HepG2 (cell line): ENCODE measurements at regions of chr14 and their contacts with region 1.

Region 1: GRCh38 chr14:23269193-23269592 is 16.7 kb downstream of the HOMEZ start:
- DNase-seq: no peak
- ATAC-seq: peak; percentile 20; the same call in 1 of the 3 replicates
- H3K4me3 ChIP-seq: no peak overlapping the region
- H3K27ac ChIP-seq: no peak overlapping the region
- H3K4me1 ChIP-seq: no peaks in the 10 kb centered on the region
- H3K27me3 ChIP-seq: peaks cover 0 to 8% of the 10 kb centered on the region in 2 experiments; a peak in 1 of 5 replicates
- CTCF ChIP-seq: no peak
- EP300 ChIP-seq: no peak
- POLR2A ChIP-seq: no peak
- RAD21 ChIP-seq: no peak

Region 2: DNA sequence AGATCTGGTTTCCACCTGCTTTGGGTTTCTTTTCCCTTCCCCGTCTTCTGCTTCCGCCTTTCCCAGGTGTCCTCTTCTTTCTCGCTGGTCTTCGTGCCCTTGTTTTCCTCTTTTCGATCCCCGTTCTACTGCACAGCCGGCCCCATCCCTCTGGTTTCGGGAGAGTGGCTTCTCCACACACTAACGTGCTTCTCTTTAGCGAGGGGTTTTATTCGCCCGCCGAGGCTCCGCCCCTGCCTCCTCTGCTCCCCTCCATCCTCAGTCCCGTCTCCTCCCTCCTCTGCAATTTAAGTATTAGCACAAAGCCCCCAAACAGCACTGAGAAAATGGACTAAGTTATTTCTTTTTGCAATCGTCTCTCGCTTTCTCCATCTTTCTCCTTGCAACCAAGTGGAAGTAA is 85.7 kb before region 1 on chr14 and contains the start of gene SLC7A8:
- CTCF ChIA-PET with region 1: no interaction called
- POLR2A ChIA-PET with region 1: no interaction called
- in situ Hi-C with region 1: no loop called
- intact Hi-C with region 1: no loop called
- DNase-seq: no peak
- ATAC-seq: peak; percentile 18; the same call in 2 of the 3 replicates
- H3K4me3 ChIP-seq: no peak within 1 kb of the TSS; a peak in 1 of 6 replicates
- H3K27ac ChIP-seq: no peak within 1 kb of the TSS
- H3K4me1 ChIP-seq: peaks cover 12% of the 10 kb centered on the region
- H3K27me3 ChIP-seq: peaks cover 7 to 57% of the 10 kb centered on the region in 2 experiments; a peak in 4 of 5 replicates
- CTCF ChIP-seq: no peak
- EP300 ChIP-seq: no peak
- POLR2A ChIP-seq: no peak
- RAD21 ChIP-seq: no peak
- total RNA-seq, gene SLC7A8: not detected in 2 replicates

Region 3: GRCh38 chr14:23195550-23196101 is 73.6 kb before region 1 on chr14:
- CTCF ChIA-PET with region 1: no interaction called
- POLR2A ChIA-PET with region 1: no interaction called
- in situ Hi-C with region 1: no loop called
- intact Hi-C with region 1: no loop called
- DNase-seq: peak; percentile 35
- ATAC-seq: peak; percentile 49
- H3K4me3 ChIP-seq: no peak overlapping the region
- H3K27ac ChIP-seq: no peak overlapping the region
- H3K4me1 ChIP-seq: peaks cover 24% of the 10 kb centered on the region
- H3K27me3 ChIP-seq: 0 out of 5 replicates have a peak, but pooled peaks cover 0 to 3% of the 10 kb centered on the region in 2 experiments
- CTCF ChIP-seq: no peak
- EP300 ChIP-seq: peak in 1 of 2 experiments; percentile 28; a peak in 1 of 4 replicates
- POLR2A ChIP-seq: no peak
- RAD21 ChIP-seq: no peak

Region 4: GRCh38 chr14:23294734-23295561 is 25.8 kb after region 1 on chr14:
- CTCF ChIA-PET with region 1: interaction called, 22 read pairs
- POLR2A ChIA-PET with region 1: no interaction called
- in situ Hi-C with region 1: loop called (anchors 5 kb)
- intact Hi-C with region 1: loop called (anchors 1 kb)
- DNase-seq: peak; percentile 77
- ATAC-seq: peak; percentile 75
- H3K4me3 ChIP-seq: no peak overlapping the region
- H3K27ac ChIP-seq: no peak overlapping the region
- H3K4me1 ChIP-seq: peaks cover 24% of the 10 kb centered on the region
- H3K27me3 ChIP-seq: no peaks in the 10 kb centered on the region
- CTCF ChIP-seq: peak; percentile 94
- EP300 ChIP-seq: peak; percentile 20 to 38; a peak in 1 of 4 replicates
- POLR2A ChIP-seq: peak in 1 of 2 experiments; percentile 34; a peak in 1 of 4 replicates
- RAD21 ChIP-seq: 0 out of 2 replicates have a peak, but pooled peaks have one; percentile 33

Region 5: DNA sequence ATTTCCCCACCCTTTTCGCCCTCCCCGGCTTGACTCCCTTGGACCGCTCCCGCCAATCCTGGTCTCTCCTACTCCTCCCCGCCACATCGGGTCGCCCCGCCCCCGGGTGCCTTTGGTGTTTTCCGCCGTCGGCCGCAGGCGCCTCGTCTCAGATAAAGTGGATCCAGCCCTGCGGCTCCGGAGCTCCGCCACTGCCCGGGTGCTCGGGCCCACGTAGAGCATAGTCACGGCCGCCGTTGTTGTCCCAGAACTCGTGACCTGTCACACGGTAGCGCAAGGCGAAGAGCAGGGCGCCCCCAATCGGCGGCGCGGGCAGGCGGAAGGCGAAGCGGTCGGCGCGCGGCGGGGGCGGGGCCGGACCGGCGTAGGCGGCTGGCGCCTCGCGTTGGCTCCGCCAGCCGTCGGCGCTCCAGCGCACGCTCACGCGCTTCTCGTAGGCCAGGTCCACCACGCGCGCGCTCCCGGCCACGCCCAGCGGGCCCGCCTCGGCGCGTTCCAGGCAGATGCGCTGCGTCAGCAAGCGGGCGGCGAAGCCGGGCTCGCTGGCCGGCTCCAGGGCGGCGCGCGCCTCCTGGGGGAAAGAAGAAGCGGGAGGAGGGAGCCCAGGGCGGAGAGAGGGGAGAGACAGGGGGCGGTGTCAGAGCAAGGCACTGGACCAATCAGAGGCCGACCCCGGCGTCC is 32.2 kb after region 1 on chr14:
- CTCF ChIA-PET with region 1: interaction called, 17 read pairs
- POLR2A ChIA-PET with region 1: interaction called, 4 read pairs
- in situ Hi-C with region 1: loop called (anchors 5 kb)
- intact Hi-C with region 1: loop called (anchors 1 kb)
- DNase-seq: peak; percentile 100
- ATAC-seq: peak; percentile 87
- H3K4me3 ChIP-seq: peak overlapping the region; percentile 67 to 88 (median 75)
- H3K27ac ChIP-seq: peak overlapping the region; percentile 91
- H3K4me1 ChIP-seq: peaks cover 57% of the 10 kb centered on the region
- H3K27me3 ChIP-seq: no peaks in the 10 kb centered on the region; a peak in 1 of 5 replicates
- CTCF ChIP-seq: peak; percentile 92
- EP300 ChIP-seq: peak in 1 of 2 experiments; percentile 54; a peak in 2 of 4 replicates
- POLR2A ChIP-seq: no peak
- RAD21 ChIP-seq: peak; percentile 87

Region 6: DNA sequence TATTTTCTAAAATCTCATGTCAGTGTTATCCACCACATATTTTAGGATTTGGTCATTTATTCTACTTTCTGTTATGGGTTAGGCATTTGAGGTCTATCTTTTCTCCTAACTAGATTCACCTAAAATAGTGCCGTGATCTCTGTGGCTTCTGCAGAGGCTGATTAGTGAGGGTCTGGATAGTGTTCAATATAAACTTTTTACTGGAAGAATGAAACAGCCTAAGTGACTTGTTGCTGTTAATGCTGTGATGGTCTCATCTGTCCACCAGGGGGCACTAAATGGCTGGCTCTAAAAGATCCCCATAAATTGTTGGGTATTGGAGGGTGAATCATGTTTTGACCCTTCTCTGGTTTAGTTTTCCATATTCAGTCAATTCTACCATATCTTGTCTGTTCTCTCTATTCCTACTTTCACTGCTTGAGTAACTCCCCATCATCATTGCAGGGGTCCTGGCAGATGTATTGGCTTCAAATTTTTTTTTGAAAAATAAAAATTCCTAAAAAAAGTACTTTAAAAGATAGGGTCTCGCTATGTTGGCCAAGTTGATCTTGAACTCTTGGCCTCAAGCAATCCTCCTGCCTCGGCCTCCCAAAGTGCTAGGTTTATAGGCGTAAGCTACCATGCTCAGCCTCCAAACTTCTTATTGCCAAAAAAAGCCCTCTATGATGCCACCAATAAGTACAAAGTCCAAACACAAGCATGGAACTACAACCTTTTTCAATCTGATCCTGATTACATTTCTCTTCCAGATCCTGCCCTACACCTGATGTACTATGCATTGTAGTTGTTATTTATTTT is 59.0 kb after region 1 on chr14:
- CTCF ChIA-PET with region 1: interaction called, 19 read pairs
- POLR2A ChIA-PET with region 1: no interaction called
- in situ Hi-C with region 1: no loop called
- intact Hi-C with region 1: loop called (anchors 1 kb)
- DNase-seq: peak; percentile 89
- ATAC-seq: peak; percentile 75
- H3K4me3 ChIP-seq: no peak overlapping the region
- H3K27ac ChIP-seq: no peak overlapping the region
- H3K4me1 ChIP-seq: peaks cover 22% of the 10 kb centered on the region
- H3K27me3 ChIP-seq: peaks cover 0 to 20% of the 10 kb centered on the region in 2 experiments; a peak in 2 of 5 replicates
- CTCF ChIP-seq: peak; percentile 95
- EP300 ChIP-seq: no peak
- POLR2A ChIP-seq: no peak; a peak in 1 of 4 replicates
- RAD21 ChIP-seq: peak; percentile 90

Region 7: DNA sequence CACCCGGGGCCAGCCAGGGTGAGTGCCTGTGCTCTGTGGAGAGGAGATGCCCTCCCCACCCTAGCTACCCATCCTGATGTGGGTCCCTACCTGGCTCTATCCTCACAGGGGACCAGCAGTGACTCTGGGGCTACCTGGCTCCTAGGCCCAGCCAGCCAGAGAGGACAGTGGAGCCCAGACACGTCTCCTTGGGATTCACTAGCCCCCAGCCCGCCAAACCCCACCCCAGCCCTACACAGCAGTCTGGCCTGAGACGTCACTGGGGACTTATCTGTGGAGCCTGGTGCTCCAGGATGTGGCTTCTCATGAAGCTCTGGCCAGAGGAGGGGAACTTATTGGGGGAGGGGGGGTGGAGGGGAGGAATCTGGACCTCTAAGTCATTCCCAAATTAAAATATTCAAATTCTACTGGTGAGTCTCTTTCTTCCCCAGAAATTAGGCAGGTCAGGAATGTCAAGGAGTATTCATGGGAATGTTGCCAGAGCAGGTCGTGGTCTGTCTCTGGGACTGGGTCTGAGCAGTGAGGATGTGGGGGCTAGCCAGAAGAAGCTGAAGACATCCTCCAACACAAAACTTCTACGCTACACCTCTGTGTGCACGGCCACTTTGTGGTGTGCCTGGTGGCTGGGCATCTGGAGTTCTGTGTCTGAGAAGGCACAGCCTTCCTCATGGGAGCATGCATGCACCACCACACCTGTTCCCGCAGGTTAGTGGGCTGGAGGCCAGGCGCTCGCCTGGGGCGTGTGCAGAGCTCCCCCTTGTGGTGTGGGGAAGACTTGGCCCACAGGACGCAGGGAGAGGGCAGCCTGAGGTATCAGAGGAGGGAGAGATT is 110.4 kb after region 1 on chr14:
- CTCF ChIA-PET with region 1: interaction called, 96 read pairs
- POLR2A ChIA-PET with region 1: no interaction called
- in situ Hi-C with region 1: loop called (anchors 5 kb)
- intact Hi-C with region 1: loop called (anchors 1 kb)
- DNase-seq: peak; percentile 66
- ATAC-seq: peak; percentile 88
- H3K4me3 ChIP-seq: no peak overlapping the region
- H3K27ac ChIP-seq: no peak overlapping the region
- H3K4me1 ChIP-seq: no peaks in the 10 kb centered on the region
- H3K27me3 ChIP-seq: peaks cover 26 to 90% of the 10 kb centered on the region in 2 experiments
- CTCF ChIP-seq: peak; percentile 100
- EP300 ChIP-seq: no peak
- POLR2A ChIP-seq: no peak
- RAD21 ChIP-seq: peak; percentile 98

Region 8: DNA sequence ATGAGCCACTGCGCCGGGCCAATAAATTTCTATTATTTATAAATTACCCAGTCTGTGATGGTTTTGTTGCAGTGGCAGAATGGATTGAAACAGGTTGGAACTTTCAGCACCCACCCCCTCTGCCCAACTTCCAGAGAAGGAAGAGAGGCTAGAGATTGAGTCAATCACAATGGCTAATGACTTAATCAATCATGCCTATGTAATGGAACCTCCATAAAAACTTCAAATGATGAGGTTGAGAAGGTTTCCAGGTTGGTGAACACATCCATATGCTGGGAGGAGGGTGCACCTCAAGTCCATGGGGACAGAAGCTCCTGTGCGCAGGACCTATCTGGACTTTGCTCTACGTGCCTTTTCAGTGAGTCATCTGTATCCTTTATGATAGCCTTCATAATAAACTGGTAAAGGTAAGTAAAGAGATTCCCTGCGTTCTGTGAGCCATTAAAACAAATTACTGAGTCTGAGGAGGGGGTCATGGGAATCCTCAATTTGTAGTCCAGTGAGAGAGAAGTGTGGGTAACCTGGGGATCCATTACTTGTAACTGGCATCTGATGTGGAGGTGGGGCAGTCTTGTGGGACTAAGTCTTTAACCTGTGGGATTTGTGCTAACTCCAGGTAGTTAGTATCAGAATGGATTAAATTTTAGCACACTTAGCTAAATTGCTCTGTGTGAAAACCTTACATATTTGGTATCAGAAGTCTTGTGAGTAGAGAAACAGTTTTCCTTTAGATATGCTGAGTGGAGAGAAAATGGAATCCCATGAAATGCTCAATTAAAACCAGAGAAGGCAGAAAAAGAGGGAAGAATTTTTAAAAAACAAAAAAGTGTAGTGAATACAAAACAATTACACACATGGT is 188.6 kb after region 1 on chr14:
- CTCF ChIA-PET with region 1: no interaction called
- POLR2A ChIA-PET with region 1: no interaction called
- in situ Hi-C with region 1: no loop called
- intact Hi-C with region 1: loop called (anchors 1 kb)
- DNase-seq: peak; percentile 96
- ATAC-seq: peak; percentile 97
- H3K4me3 ChIP-seq: no peak overlapping the region
- H3K27ac ChIP-seq: no peak overlapping the region
- H3K4me1 ChIP-seq: peaks cover 32% of the 10 kb centered on the region
- H3K27me3 ChIP-seq: no peaks in the 10 kb centered on the region
- CTCF ChIP-seq: no peak
- EP300 ChIP-seq: peak in 1 of 2 experiments; percentile 51; a peak in 1 of 4 replicates
- POLR2A ChIP-seq: no peak
- RAD21 ChIP-seq: no peak